Activated CD8-positive, alpha-beta T cell treated with anti-CD3 and anti-CD28 coated beads for 36 hours (primary cell): ENCODE measurements at regions of chr5 and their contacts with region 1.

Region 1: GRCh38 chr5:95846554-95847260 is 24.2 kb upstream of the GLRX start:
- DNase-seq: peak; percentile 77
- ATAC-seq: peak; percentile 78
- H3K4me3 Mint-ChIP-seq: no peak overlapping the region
- H3K27ac Mint-ChIP-seq: no peak overlapping the region
- H3K4me1 Mint-ChIP-seq: peaks cover 17% of the 10 kb centered on the region
- H3K27me3 Mint-ChIP-seq: no peaks in the 10 kb centered on the region
- CTCF ChIP-seq: peak; percentile 93

Region 2: DNA sequence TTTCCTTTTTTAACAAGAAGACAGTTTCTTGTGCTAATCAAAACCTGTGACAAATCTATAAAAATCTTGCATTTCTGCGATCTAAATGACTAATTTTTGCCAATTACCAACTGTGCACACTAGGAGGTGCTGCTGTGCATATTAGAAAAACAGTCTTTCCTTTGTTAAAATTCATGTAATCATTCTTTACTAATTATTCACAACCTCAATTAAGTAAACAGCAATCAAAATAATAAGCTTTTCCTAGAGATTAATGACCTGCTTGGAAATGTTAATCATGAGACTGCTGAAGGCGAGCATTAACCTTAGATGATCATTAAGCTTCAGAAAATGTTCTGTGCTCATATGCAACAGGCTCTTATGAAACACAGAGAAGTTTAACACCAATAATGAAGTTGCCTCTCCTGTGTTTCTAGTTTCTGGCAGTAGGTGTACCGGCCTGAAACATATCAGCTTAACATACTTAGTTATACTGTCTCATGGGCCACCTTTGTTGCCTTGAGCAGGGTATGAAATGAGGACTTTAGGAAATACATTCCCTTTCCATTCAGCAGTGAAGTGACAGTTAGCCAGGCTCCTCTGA is 182.4 kb before region 1 on chr5:
- CTCF ChIA-PET with region 1: interaction called, 14 read pairs
- POLR2A ChIA-PET with region 1: no interaction called
- intact Hi-C with region 1: no loop called
- DNase-seq: peak; percentile 52
- ATAC-seq: peak; percentile 61
- H3K4me3 Mint-ChIP-seq: no peak overlapping the region
- H3K27ac Mint-ChIP-seq: no peak overlapping the region
- H3K4me1 Mint-ChIP-seq: peaks cover 3% of the 10 kb centered on the region
- H3K27me3 Mint-ChIP-seq: no peaks in the 10 kb centered on the region
- CTCF ChIP-seq: peak; percentile 92

Region 3: DNA sequence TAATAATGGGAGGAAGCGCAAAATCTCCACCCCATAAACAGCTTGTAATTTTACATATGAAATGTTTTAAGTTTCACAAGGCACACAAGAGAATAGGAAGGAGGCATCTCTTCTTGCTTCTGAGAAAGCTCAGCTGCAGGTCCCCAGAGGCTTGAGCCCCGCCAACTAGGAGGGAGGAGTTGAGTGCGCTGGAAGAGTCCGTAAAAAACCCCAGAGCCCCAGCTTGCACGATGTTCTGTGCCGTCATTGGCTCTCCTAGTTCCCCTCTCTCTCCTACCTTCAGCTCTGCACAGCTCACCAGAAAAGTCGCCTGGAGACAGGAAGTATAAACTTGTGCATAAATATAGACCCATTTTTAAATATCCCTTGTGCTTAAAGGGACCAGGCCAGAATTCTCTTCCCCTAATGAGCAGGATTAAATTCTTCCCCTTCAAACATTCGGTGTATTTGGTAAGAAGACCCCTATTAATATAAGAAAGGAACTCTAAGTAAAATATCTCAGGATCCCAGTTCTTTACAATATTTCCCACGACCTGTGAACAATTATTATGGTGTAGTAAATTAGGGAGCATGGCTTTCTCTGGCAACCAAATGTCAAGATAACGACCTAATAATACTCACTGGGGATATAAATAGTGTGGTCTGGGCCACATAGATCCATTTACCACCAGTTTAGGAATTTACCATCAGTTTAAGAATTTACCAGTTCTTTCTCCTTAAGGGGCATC is 37.9 kb before region 1 on chr5:
- CTCF ChIA-PET with region 1: interaction called, 6 read pairs
- POLR2A ChIA-PET with region 1: no interaction called
- intact Hi-C with region 1: loop called (anchors 5 kb)
- DNase-seq: peak; percentile 90
- ATAC-seq: peak; percentile 99
- H3K4me3 Mint-ChIP-seq: peak overlapping the region; percentile 52
- H3K27ac Mint-ChIP-seq: peak overlapping the region; percentile 86
- H3K4me1 Mint-ChIP-seq: peaks cover 56% of the 10 kb centered on the region
- H3K27me3 Mint-ChIP-seq: no peaks in the 10 kb centered on the region
- CTCF ChIP-seq: no peak

Region 4: GRCh38 chr5:95835682-95836385 is 10.9 kb before region 1 on chr5:
- CTCF ChIA-PET with region 1: interaction called, 21 read pairs
- POLR2A ChIA-PET with region 1: interaction called, 3 read pairs
- intact Hi-C with region 1: no loop called
- DNase-seq: peak; percentile 41
- ATAC-seq: no peak
- H3K4me3 Mint-ChIP-seq: peak overlapping the region; percentile 74
- H3K27ac Mint-ChIP-seq: peak overlapping the region; percentile 93
- H3K4me1 Mint-ChIP-seq: peaks cover 40% of the 10 kb centered on the region
- H3K27me3 Mint-ChIP-seq: no peaks in the 10 kb centered on the region
- CTCF ChIP-seq: no peak